Aorta (tissue), 5 donors: ENCODE measurements at regions of chr3 and their contacts with region 1.

Region 1: GRCh38 chr3:31391150-31391549 is 141.6 kb upstream of the STT3B start:
- DNase-seq: no peak
- ATAC-seq: no peak
- H3K4me3 ChIP-seq: no peak overlapping the region
- H3K27ac ChIP-seq: no peak overlapping the region
- H3K4me1 ChIP-seq: no peaks in the 10 kb centered on the region
- H3K27me3 ChIP-seq: no peaks in the 10 kb centered on the region

Region 2: GRCh38 chr3:31416980-31417379 is 25.8 kb after region 1 on chr3:
- intact Hi-C with region 1: loop called in 1 of 2 experiments (anchors 2 kb)
- DNase-seq: no peak
- ATAC-seq: no peak
- H3K4me3 ChIP-seq: no peak overlapping the region
- H3K27ac ChIP-seq: no peak overlapping the region
- H3K4me1 ChIP-seq: no peaks in the 10 kb centered on the region
- H3K27me3 ChIP-seq: peaks cover 0 to 2% of the 10 kb centered on the region in 2 donors

Region 3: DNA sequence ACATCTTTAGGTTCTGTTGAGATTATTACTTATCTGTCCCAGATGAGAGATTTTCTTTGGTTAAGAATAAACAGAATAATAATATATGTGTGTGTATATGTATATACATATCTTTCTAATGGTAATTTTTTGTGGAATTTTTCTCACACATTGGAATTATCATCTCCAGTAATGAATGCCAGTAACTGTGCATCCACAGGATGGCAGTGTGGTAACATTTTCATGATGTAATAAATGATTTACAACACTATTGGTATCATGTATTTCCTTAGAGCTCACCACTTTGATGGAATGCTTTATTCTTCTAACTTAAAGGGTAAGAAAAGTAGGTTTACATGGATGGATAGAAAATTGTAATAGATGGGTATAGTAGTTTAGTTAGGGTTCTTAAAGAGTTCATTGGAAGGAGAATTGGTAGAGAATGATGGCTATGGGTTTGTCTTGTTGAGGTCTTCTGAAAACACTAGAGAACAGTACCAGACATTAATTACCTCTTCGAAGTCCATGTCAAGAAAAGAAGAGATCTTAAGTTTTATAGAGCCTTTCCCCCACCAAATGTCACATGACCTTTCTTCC is 219.6 kb after region 1 on chr3:
- intact Hi-C with region 1: no loop called
- DNase-seq: no peak
- ATAC-seq: no peak
- H3K4me3 ChIP-seq: no peak overlapping the region
- H3K27ac ChIP-seq: no peak overlapping the region
- H3K4me1 ChIP-seq: no peaks in the 10 kb centered on the region
- H3K27me3 ChIP-seq: no peaks in the 10 kb centered on the region